ENCODE measurements at regions of chr19 and their contacts with region 1.

Region 1: GRCh38 chr19:47112997-47113849 is at the start of gene ZC3H4:
- DNase-seq: peak; percentile 96 to 100 (median 100)
- ATAC-seq: peak; percentile 90
- H3K4me3 ChIP-seq: peak within 1 kb of the TSS; percentile 84
- H3K4me3 Mint-ChIP-seq: peak within 1 kb of the TSS; percentile 93 to 100 (median 98)
- H3K27ac ChIP-seq: peak within 1 kb of the TSS; percentile 99
- H3K27ac Mint-ChIP-seq: peak within 1 kb of the TSS; percentile 99 to 100 (median 100)
- H3K4me1 ChIP-seq: peaks cover 17 to 25% of the 10 kb centered on the region in 2 donors
- H3K4me1 Mint-ChIP-seq: peaks cover 22 to 38% (median 35%) of the 10 kb centered on the region in 7 donors
- H3K27me3 ChIP-seq: no peaks in the 10 kb centered on the region
- H3K27me3 Mint-ChIP-seq: peaks cover 0 to 2% (median 0%) of the 10 kb centered on the region in 5 donors
- total RNA-seq, gene ZC3H4: 53.6 to 123 (median 73.0) TPM

Region 2: DNA sequence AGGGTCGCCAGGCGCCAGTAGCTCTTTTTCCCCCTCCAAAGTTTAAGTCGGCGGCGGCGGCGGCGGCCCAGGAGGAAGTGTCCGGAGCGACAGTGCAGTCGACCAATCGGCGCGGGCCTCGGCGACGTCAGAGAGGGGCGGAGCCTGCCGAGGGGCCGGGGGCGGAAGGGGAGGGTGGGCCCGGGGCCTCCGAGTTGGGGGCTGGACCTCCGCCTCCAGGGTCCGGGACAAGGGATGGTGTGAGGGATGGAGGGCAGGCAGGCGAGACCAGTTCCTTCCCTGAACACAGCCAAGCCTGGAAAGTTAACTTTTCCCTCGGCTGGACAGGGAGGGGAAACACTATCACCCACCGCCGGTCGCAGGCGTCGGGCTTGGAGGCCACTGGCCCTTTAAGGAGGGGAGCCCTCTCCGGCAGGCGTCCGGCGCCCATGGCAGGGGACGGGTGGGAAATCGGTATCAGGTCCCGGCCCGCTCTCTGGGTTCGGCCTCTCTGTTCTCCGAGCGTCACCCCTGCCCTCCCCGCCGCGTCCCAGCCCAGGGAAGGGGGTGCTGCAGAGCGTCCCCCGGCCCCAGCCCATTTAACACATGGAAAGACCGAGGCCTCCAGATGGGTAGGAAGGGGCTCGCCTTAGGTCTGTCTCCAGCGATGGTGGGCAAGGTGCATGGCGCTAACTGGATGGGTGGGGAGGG is 396.0 kb before region 1 on chr19 and contains the start of gene PRKD2:
- CTCF ChIA-PET with region 1: no interaction called
- POLR2A ChIA-PET with region 1: no interaction called
- intact Hi-C with region 1: loop called (anchors 1 to 5 kb)
- DNase-seq: peak; percentile 68 to 96 (median 80)
- ATAC-seq: peak; percentile 71
- H3K4me3 ChIP-seq: peak within 1 kb of the TSS; percentile 97
- H3K4me3 Mint-ChIP-seq: peak within 1 kb of the TSS; percentile 89 to 98 (median 95)
- H3K27ac ChIP-seq: peak within 1 kb of the TSS; percentile 98
- H3K27ac Mint-ChIP-seq: peak within 1 kb of the TSS; percentile 94 to 99 (median 97)
- H3K4me1 ChIP-seq: peaks cover 29% of the 10 kb centered on the region in 2 donors
- H3K4me1 Mint-ChIP-seq: peaks cover 30 to 57% (median 44%) of the 10 kb centered on the region in 7 donors
- H3K27me3 ChIP-seq: no peaks in the 10 kb centered on the region
- H3K27me3 Mint-ChIP-seq: no peaks in the 10 kb centered on the region
- total RNA-seq, gene PRKD2: 120 to 181 (median 123) TPM

Region 3: DNA sequence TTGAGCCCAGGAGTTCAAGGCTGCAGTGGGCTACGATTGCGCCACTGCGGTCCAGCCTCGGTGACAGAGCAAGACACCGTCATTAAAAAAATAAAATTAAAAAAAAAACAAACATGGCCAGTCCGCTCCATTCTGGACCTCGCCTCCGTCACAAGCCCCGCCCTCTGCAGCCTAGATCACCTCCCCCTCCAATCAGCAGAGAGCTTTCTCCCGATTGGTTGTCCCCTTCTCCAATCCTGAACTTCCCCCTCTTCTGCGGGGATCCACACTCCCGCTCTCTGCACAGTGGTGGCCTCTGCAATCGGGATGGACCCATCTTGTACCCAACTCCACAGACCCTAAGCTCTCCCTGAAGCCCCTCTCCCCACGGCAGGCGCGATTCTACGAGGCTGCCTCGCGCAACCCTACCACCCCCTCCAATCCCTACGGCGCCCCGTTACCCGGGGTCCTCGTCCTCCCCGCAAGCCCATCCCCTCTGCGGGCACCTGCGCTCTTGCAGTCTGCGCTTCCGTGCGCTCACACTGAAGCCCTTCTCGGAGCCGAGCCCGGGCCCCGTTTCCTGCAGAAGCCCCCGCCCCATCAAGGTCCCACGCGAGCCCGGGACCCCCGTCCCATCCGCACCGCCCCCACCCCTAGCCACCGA is 65.3 kb before region 1 on chr19:
- CTCF ChIA-PET with region 1: interaction called, 3 read pairs
- POLR2A ChIA-PET with region 1: interaction called, 7 read pairs
- intact Hi-C with region 1: loop called (anchors 1 kb)
- DNase-seq: peak; percentile 41 to 80 (median 58)
- ATAC-seq: peak; percentile 57
- H3K4me3 ChIP-seq: peak overlapping the region; percentile 86
- H3K4me3 Mint-ChIP-seq: peak overlapping the region; percentile 89 to 100 (median 97)
- H3K27ac ChIP-seq: peak overlapping the region; percentile 79
- H3K27ac Mint-ChIP-seq: peak overlapping the region; percentile 82 to 96 (median 93)
- H3K4me1 ChIP-seq: peaks cover 6 to 7% of the 10 kb centered on the region in 2 donors
- H3K4me1 Mint-ChIP-seq: peaks cover 10 to 22% (median 16%) of the 10 kb centered on the region in 7 donors
- H3K27me3 ChIP-seq: no peaks in the 10 kb centered on the region
- H3K27me3 Mint-ChIP-seq: peaks cover 0 to 2% (median 0%) of the 10 kb centered on the region in 5 donors

Region 4: DNA sequence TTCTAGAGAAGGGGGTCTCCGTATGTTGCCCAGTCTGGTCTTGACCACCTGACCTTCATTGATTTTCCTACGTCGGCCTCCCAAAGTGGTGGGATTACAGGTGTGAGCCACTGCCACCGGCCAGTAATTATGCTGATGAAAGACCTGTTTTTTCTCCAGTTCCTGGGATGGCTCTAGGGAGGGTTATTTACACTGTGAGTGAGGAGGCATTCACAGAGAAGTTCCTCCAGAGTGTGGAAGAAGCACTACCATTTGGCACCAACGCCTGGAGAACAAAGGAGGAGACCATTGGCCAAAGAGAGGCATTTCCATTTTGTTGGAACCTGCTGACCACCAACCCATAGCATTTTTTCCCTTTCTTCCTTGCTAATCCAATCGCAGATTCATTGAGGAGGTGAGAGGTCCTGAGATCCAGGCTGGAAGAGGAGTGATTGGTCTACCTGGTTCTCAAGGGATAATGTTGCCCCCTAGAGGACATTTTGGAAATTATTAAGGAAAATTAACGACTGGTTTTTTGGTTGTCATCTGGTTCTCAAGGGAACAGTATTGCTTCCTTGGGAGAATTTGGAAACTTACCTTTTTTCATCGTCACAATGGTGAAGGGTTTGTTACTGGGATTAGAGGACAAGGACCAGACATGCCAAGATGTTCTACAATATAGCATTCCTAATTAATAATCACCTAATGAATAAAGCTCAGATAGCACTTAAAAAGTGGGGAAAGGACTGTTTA is 11.9 kb after region 1 on chr19:
- CTCF ChIA-PET with region 1: interaction called, 7 read pairs
- POLR2A ChIA-PET with region 1: interaction called, 32 read pairs
- intact Hi-C with region 1: loop called (anchors 1 kb)
- DNase-seq: peak in 7 of 9 donors; percentile 31 to 65 (median 53)
- ATAC-seq: peak; percentile 79
- H3K4me3 ChIP-seq: no peak overlapping the region
- H3K4me3 Mint-ChIP-seq: no peak overlapping the region
- H3K27ac ChIP-seq: no peak overlapping the region
- H3K27ac Mint-ChIP-seq: no peak overlapping the region
- H3K4me1 ChIP-seq: peaks cover 0 to 4% of the 10 kb centered on the region in 2 donors
- H3K4me1 Mint-ChIP-seq: peaks cover 0 to 11% (median 7%) of the 10 kb centered on the region in 7 donors
- H3K27me3 ChIP-seq: no peaks in the 10 kb centered on the region
- H3K27me3 Mint-ChIP-seq: peaks cover 0 to 6% (median 0%) of the 10 kb centered on the region in 5 donors

Region 5: DNA sequence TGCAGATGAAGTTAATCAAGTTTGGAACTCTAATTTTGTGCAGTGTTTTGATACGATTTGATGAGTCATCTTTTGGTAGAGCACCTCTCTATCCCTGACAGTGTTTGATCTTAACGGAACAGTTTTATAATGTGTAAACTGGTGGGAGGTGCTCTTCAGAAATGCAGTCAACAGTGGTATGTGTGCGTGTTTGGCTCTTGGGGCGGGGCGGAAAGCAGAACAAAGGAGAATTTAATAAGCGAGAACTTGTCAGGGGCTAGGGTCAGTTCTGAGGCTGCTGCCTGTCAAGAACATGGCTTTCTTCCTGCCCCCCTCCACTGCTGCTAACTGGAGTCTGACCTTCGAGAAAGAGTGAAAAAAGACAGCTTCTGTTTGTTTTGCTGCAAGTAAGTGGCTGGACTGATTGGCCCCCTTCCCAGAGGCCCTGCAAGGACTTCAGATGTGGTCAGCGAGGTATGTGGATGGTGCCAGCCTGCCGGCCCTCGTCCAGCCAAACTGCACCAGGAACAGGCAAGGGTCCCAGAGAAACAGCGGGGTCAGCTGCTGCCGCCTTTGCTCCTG is 77.0 kb after region 1 on chr19:
- CTCF ChIA-PET with region 1: interaction called, 4 read pairs
- POLR2A ChIA-PET with region 1: interaction called, 21 read pairs
- intact Hi-C with region 1: no loop called
- DNase-seq: peak in 8 of 9 donors; percentile 52 to 77 (median 64)
- ATAC-seq: peak; percentile 53
- H3K4me3 ChIP-seq: no peak overlapping the region
- H3K4me3 Mint-ChIP-seq: peak overlapping the region; percentile 48 to 83 (median 72)
- H3K27ac ChIP-seq: peak overlapping the region; percentile 25
- H3K27ac Mint-ChIP-seq: peak overlapping the region; percentile 72 to 98 (median 95)
- H3K4me1 ChIP-seq: peaks cover 37 to 77% of the 10 kb centered on the region in 2 donors
- H3K4me1 Mint-ChIP-seq: peaks cover 41 to 81% (median 71%) of the 10 kb centered on the region in 7 donors
- H3K27me3 ChIP-seq: no peaks in the 10 kb centered on the region
- H3K27me3 Mint-ChIP-seq: no peaks in the 10 kb centered on the region

Region 6: GRCh38 chr19:47273313-47273977 is 160.2 kb after region 1 on chr19:
- CTCF ChIA-PET with region 1: no interaction called
- POLR2A ChIA-PET with region 1: interaction called, 17 read pairs
- intact Hi-C with region 1: loop called (anchors 1 kb)
- DNase-seq: peak; percentile 81 to 91 (median 88)
- ATAC-seq: peak; percentile 74
- H3K4me3 ChIP-seq: peak overlapping the region; percentile 100
- H3K4me3 Mint-ChIP-seq: peak overlapping the region; percentile 83 to 99 (median 95)
- H3K27ac ChIP-seq: peak overlapping the region; percentile 95
- H3K27ac Mint-ChIP-seq: peak overlapping the region; percentile 93 to 98 (median 97)
- H3K4me1 ChIP-seq: peaks cover 3 to 14% of the 10 kb centered on the region in 2 donors
- H3K4me1 Mint-ChIP-seq: peaks cover 20 to 28% (median 27%) of the 10 kb centered on the region in 7 donors
- H3K27me3 ChIP-seq: no peaks in the 10 kb centered on the region
- H3K27me3 Mint-ChIP-seq: no peaks in the 10 kb centered on the region

Region 7: GRCh38 chr19:47336853-47337279 is 223.6 kb after region 1 on chr19:
- CTCF ChIA-PET with region 1: no interaction called
- POLR2A ChIA-PET with region 1: no interaction called
- intact Hi-C with region 1: no loop called
- DNase-seq: peak in 1 of 9 donors; percentile 8
- ATAC-seq: peak; percentile 85
- H3K4me3 ChIP-seq: no peak overlapping the region
- H3K4me3 Mint-ChIP-seq: peak overlapping the region in 3 of 10 donors; percentile 13 to 41 (median 14)
- H3K27ac ChIP-seq: no peak overlapping the region
- H3K27ac Mint-ChIP-seq: peak overlapping the region in 1 of 9 donors; percentile 80
- H3K4me1 ChIP-seq: peaks cover 3 to 9% of the 10 kb centered on the region in 2 donors
- H3K4me1 Mint-ChIP-seq: peaks cover 9 to 16% (median 10%) of the 10 kb centered on the region in 7 donors
- H3K27me3 ChIP-seq: no peaks in the 10 kb centered on the region
- H3K27me3 Mint-ChIP-seq: peaks cover 0 to 3% (median 0%) of the 10 kb centered on the region in 5 donors

Region 8: GRCh38 chr19:48872182-48872883 is 1759.1 kb after region 1 on chr19 and contains the start of gene PPP1R15A:
- CTCF ChIA-PET with region 1: no interaction called
- POLR2A ChIA-PET with region 1: no interaction called
- intact Hi-C with region 1: loop called in 1 of 2 experiments (anchors 2 kb)
- DNase-seq: peak; percentile 96 to 99 (median 98)
- ATAC-seq: peak; percentile 58
- H3K4me3 ChIP-seq: peak within 1 kb of the TSS; percentile 86
- H3K4me3 Mint-ChIP-seq: peak within 1 kb of the TSS; percentile 94 to 100 (median 98)
- H3K27ac ChIP-seq: peak within 1 kb of the TSS; percentile 99
- H3K27ac Mint-ChIP-seq: peak within 1 kb of the TSS; percentile 94 to 100 (median 99)
- H3K4me1 ChIP-seq: peaks cover 34 to 36% of the 10 kb centered on the region in 2 donors
- H3K4me1 Mint-ChIP-seq: peaks cover 31 to 51% (median 41%) of the 10 kb centered on the region in 7 donors
- H3K27me3 ChIP-seq: no peaks in the 10 kb centered on the region
- H3K27me3 Mint-ChIP-seq: peaks cover 0 to 14% (median 0%) of the 10 kb centered on the region in 5 donors
- total RNA-seq, gene PPP1R15A: 31.5 to 1,030 (median 71.9) TPM